Mammary epithelial cell (primary cell): ENCODE measurements at regions of chr18 and their contacts with region 1.

Region 1: GRCh38 chr18:70355620-70356385 is 67.0 kb downstream of the SOCS6 start:
- DNase-seq: no peak
- H3K4me3 ChIP-seq: no peak overlapping the region
- H3K27ac ChIP-seq: no peak overlapping the region
- H3K4me1 ChIP-seq: peaks cover 20% of the 10 kb centered on the region
- H3K27me3 ChIP-seq: no peaks in the 10 kb centered on the region
- CTCF ChIP-seq: no peak

Region 2: GRCh38 chr18:70205421-70206397 is 150.1 kb before region 1 on chr18 and contains the start of gene RTTN:
- CTCF ChIA-PET with region 1: no interaction called
- dilution Hi-C with region 1: no loop called
- in situ Hi-C with region 1: no loop called
- intact Hi-C with region 1: loop called (anchors 1 kb)
- DNase-seq: peak; percentile 93
- H3K4me3 ChIP-seq: peak within 1 kb of the TSS; percentile 84 to 94 (median 87)
- H3K27ac ChIP-seq: peak within 1 kb of the TSS; percentile 92
- H3K4me1 ChIP-seq: peaks cover 12% of the 10 kb centered on the region
- H3K27me3 ChIP-seq: no peaks in the 10 kb centered on the region
- CTCF ChIP-seq: no peak
- total RNA-seq, gene RTTN: 31.5 to 59.4 TPM

Region 3: GRCh38 chr18:70261141-70261788 is 94.5 kb before region 1 on chr18:
- CTCF ChIA-PET with region 1: no interaction called
- dilution Hi-C with region 1: no loop called
- in situ Hi-C with region 1: no loop called
- intact Hi-C with region 1: no loop called
- DNase-seq: no peak
- H3K4me3 ChIP-seq: no peak overlapping the region
- H3K27ac ChIP-seq: no peak overlapping the region
- H3K4me1 ChIP-seq: no peaks in the 10 kb centered on the region
- H3K27me3 ChIP-seq: no peaks in the 10 kb centered on the region
- CTCF ChIP-seq: no peak

Region 4: GRCh38 chr18:70384181-70384790 is 28.5 kb after region 1 on chr18:
- CTCF ChIA-PET with region 1: no interaction called
- dilution Hi-C with region 1: no loop called
- in situ Hi-C with region 1: no loop called
- intact Hi-C with region 1: loop called (anchors 2 kb)
- DNase-seq: peak; percentile 99
- H3K4me3 ChIP-seq: no peak overlapping the region
- H3K27ac ChIP-seq: peak overlapping the region; percentile 85
- H3K4me1 ChIP-seq: peaks cover 27% of the 10 kb centered on the region
- H3K27me3 ChIP-seq: no peaks in the 10 kb centered on the region
- CTCF ChIP-seq: no peak

Region 5: GRCh38 chr18:70421471-70422390 is 65.9 kb after region 1 on chr18:
- CTCF ChIA-PET with region 1: no interaction called
- dilution Hi-C with region 1: no loop called
- in situ Hi-C with region 1: no loop called
- intact Hi-C with region 1: loop called (anchors 2 kb)
- DNase-seq: peak; percentile 96
- H3K4me3 ChIP-seq: no peak overlapping the region
- H3K27ac ChIP-seq: peak overlapping the region; percentile 95
- H3K4me1 ChIP-seq: peaks cover 45% of the 10 kb centered on the region
- H3K27me3 ChIP-seq: no peaks in the 10 kb centered on the region
- CTCF ChIP-seq: no peak